Activated CD4-positive, alpha-beta T cell treated with anti-CD3 and anti-CD28 coated beads, Interleukin-2, amount 10 ng/mL, durations not matched to agents 7 days and 5 days (primary cell): ENCODE measurements at regions of chr3 and their contacts with region 1.

Region 1: GRCh38 chr3:138068579-138069174 is 46.7 kb downstream of the DZIP1L start:
- DNase-seq: peak; percentile 83
- H3K4me3 Mint-ChIP-seq: no peak overlapping the region
- H3K27ac Mint-ChIP-seq: no peak overlapping the region
- H3K4me1 Mint-ChIP-seq: peaks cover 14% of the 10 kb centered on the region
- H3K27me3 Mint-ChIP-seq: peaks cover 9% of the 10 kb centered on the region

Region 2: DNA sequence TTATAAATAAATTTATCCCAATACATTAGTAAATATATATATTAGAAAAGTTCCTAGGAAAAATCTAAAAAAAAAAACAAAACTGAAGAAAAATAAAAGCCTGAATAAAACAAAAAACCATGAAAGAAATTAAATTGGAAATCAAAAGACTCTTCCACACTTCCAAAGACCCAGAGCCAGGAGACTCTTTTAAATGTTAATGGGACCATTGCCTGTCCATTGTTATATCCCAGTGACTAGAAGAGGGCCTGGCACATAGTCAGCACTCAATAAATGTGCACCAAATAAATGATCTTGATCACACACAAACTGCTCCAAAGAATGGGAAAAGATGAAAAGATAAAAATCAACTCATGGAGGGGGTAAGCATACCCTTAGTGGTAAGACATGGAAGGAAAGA is 110.0 kb before region 1 on chr3:
- CTCF ChIA-PET with region 1: no interaction called
- POLR2A ChIA-PET with region 1: no interaction called
- DNase-seq: no peak
- H3K4me3 Mint-ChIP-seq: no peak overlapping the region
- H3K27ac Mint-ChIP-seq: no peak overlapping the region
- H3K4me1 Mint-ChIP-seq: no peaks in the 10 kb centered on the region
- H3K27me3 Mint-ChIP-seq: peaks cover 23% of the 10 kb centered on the region

Region 3: DNA sequence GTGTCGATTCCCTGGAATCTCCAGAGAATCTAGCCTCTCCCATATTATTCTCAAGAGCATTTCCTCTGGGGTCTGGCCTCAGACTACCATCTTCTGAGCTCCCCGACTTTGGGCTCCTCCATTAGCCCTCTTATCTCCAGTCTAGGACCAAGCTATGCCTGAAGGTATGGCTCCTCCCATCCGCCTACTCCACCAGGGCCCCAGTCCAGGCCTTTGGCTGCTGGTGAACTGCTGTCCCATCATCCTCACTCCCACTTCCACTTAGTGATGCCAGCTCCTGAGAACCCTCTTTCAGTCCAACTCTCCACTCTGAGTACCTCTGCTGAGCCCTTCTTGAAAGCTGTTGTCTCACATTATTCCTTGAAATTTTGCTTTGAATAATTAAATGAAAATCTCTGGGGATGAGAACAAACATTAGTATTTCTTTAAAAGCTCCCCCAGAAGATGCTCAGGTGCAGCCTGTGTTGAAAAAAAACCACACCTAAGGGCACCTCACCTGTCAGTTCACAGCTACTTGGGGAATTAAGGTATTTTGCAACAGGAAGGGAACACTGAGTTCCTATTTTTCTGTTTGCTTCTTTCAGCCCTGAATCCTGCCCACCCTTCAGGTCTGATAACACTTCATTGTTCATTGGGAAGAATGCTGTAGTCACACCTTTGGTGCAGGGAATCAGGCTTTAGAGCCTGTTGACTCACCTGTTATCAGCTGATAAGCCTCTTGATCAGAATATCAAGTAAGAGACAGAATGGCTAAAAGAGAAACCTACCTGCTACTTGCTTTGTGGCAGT is 49.2 kb before region 1 on chr3:
- CTCF ChIA-PET with region 1: no interaction called
- POLR2A ChIA-PET with region 1: no interaction called
- DNase-seq: no peak
- H3K4me3 Mint-ChIP-seq: no peak overlapping the region
- H3K27ac Mint-ChIP-seq: no peak overlapping the region
- H3K4me1 Mint-ChIP-seq: no peaks in the 10 kb centered on the region
- H3K27me3 Mint-ChIP-seq: no peaks in the 10 kb centered on the region

Region 4: GRCh38 chr3:138118612-138119422 is 50.1 kb after region 1 on chr3:
- CTCF ChIA-PET with region 1: interaction called, 17 read pairs
- POLR2A ChIA-PET with region 1: no interaction called
- DNase-seq: peak; percentile 68
- H3K4me3 Mint-ChIP-seq: no peak overlapping the region
- H3K27ac Mint-ChIP-seq: no peak overlapping the region
- H3K4me1 Mint-ChIP-seq: peaks cover 7% of the 10 kb centered on the region
- H3K27me3 Mint-ChIP-seq: peaks cover 34% of the 10 kb centered on the region